Motor neuron (in vitro differentiated cells): ENCODE measurements at regions of chr6 and their contacts with region 1.

Region 1: DNA sequence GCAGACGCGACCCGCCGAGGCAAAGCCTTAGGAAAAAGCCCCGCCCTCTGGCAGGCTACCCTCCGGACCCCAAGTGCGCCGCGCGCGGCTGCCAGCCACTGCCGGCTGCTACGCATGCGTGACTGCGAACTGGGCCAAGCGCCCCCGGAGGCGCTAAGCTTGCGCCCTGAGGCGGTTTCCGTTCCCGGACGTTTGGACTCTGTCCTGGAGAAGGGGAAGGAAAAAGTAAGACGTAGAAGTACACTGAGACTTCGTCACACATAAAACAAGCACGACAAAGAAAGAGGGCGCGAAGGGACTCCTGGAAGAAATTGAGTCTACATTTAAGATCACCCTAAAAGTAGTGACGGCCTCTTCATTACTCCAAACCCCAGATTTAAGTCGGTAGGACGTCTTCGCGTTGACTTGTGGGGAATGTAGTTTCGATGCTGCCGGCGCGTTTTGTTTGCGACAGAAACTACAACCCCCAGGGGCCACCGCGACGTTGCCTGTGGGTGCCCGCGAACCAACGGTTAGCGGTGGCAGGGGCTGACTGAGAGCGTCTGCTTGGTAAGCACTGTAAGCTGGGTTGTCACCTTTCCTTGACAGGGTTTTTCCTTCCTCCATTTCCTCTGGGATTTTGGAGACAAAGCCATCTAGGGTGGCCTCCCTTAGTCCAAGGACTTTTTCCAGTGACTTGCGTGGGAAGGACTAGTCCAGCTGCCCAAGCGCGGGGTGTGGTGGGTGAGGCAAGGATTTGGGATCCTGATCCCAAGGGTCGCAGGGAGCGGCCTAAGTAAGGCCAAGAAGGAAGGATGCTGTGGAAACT is at the start of gene CEP57L1:
- ATAC-seq: peak; percentile 56 to 86 (median 74)
- H3K4me3 ChIP-seq: peak within 1 kb of the TSS; percentile 65 to 90 (median 78)
- H3K27ac ChIP-seq: peak within 1 kb of the TSS; percentile 89 to 92
- H3K4me1 ChIP-seq: peaks cover 0 to 12% of the 10 kb centered on the region in 2 donors
- total RNA-seq, gene CEP57L1: 12.1 to 31.6 (median 26.0) TPM

Region 2: DNA sequence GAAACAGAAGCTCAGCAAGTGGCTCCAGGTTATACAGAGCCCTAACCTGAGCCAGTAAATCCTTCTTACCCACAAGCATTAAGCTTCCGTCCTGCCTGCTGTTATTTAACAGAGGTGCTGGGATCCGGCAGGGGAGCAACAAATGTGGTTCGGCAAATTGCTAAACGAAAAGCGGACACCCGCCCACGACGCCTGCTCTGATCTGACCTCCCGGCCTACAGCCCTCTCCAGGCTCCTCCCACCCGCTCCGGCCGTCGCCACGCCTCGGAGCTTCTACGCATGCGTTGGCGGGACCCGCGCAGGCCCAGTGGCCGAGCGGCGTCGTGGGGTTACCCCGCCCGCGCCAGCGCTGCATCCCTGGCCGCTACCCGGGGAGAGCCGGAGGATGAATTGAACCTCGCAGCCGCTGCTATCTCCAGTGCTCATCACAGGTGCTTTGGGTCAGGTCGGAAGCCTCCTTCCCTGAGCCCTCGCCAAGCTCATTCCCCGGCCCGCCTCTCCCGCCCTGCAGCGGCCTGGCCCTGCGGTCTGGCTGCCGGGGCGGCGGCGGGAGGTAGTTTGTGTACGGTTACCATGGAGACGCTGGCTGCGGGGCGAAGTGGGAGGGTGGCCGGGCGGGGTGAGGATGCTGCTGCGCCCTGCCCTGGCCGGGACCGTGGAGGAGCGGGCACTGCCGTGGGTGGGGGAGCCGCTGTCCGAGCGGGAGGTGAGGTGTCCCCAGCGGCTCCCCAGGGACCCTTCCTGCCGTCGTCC is 246.9 kb before region 1 on chr6 and contains the start of gene ARMC2:
- in situ Hi-C with region 1: loop called in 1 of 9 experiments (anchors 25 kb)
- ATAC-seq: peak; percentile 88 to 97 (median 92)
- H3K4me3 ChIP-seq: peak within 1 kb of the TSS; percentile 61 to 97 (median 82)
- H3K27ac ChIP-seq: peak within 1 kb of the TSS; percentile 64 to 71
- H3K4me1 ChIP-seq: peaks cover 6 to 8% of the 10 kb centered on the region in 2 donors
- total RNA-seq, gene ARMC2: 1.1 to 22.4 (median 6.1) TPM

Region 3: DNA sequence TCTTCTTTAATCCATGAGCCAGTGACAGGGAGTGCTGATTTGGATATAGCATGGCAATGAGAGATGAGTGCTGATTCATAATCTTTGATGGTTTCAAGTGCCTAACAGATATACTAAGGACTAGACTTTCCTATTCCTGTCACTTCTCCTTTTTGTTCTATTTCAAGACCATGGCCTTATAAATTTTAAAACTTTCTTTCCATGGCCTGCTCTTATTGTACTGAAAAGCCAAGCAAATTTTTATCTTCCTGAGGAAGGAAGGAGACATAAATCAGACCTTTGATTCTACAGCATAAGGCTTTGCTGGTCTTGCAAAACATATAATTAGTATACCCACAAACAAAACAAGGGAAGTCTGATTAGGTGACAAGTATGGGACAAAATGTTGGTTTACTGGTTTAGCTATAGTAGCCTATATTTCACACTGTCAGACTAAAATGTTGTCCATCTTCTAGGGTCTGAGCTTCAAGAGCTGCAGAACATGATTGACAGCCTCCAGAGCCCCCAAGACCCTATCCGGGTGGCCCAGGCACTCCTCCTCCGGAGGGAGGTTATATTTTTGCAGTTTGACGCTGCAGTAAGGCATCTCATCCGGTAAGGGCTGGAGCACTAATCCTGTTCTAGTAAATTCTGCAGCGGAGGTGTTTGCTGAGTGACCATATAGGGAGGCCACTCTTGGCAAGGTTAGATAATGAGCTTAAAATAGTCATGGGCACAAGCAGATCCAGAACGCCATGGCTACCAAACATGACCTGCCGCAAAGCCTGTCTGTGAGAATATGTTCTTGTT is 204.7 kb after region 1 on chr6:
- in situ Hi-C with region 1: no loop called
- ATAC-seq: peak in 1 of 8 experiments; percentile 38
- H3K4me3 ChIP-seq: no peak overlapping the region
- H3K27ac ChIP-seq: no peak overlapping the region
- H3K4me1 ChIP-seq: peaks cover 14 to 15% of the 10 kb centered on the region in 2 donors